Spleen (tissue), 13 donors: ENCODE measurements at regions of chr10 and their contacts with region 1.

Region 1: DNA sequence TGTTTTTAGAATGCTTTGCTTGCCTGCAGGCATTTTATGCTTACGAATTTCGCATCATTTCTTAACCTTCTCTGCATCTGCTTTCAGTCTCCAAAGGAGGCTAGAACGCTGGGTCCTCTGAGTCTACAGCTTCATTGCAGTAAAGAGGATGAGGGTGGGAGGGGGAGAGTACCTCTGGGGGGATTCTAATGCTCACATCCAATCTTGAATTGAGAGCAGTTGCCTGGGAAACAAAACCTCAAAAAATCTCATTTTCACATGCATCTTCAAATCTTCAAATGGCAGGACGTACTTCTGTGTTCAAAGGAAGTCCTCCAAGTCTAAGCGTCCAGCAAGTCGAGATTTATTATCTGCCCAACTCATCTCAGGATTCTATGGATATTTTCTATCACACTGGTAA is 100.7 kb upstream of the PRKCQ start:
- DNase-seq: no peak
- H3K4me3 ChIP-seq: no peak overlapping the region
- H3K27ac ChIP-seq: no peak overlapping the region
- H3K4me1 ChIP-seq: peaks cover 0 to 5% (median 2%) of the 10 kb centered on the region in 6 donors
- H3K27me3 ChIP-seq: peaks cover 0 to 11% (median 0%) of the 10 kb centered on the region in 7 donors
- CTCF ChIP-seq: no peak
- POLR2A ChIP-seq: no peak

Region 2: DNA sequence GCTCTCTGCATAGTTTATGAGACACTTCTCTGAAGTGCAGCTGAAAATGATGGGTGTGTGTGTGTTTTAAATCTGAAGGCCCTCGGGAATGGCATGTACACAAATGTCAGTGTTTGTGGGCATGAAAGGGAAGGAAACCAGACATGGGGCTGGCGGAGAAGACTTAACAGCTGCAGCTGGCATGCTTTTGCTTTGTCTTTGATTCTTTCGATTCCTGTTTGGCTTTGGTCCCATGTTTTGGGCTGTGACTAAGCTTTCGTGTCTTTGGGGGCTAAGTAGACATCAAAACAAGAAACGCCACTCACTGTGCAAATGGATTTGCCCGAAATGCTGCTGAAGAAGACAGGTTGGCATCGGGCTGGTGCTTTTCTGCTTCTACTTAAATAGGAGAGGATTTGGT is 298.7 kb before region 1 on chr10:
- intact Hi-C with region 1: no loop called
- DNase-seq: no peak
- H3K4me3 ChIP-seq: peak overlapping the region in 1 of 8 donors; percentile 7
- H3K27ac ChIP-seq: peak overlapping the region in 5 of 8 donors; percentile 27 to 74 (median 71)
- H3K4me1 ChIP-seq: peaks cover 0 to 37% (median 14%) of the 10 kb centered on the region in 6 donors
- H3K27me3 ChIP-seq: no peaks in the 10 kb centered on the region
- CTCF ChIP-seq: no peak
- POLR2A ChIP-seq: no peak

Region 3: GRCh38 chr10:6416892-6417512 is 263.7 kb before region 1 on chr10:
- intact Hi-C with region 1: loop called (anchors 5 kb)
- DNase-seq: no peak
- H3K4me3 ChIP-seq: no peak overlapping the region
- H3K27ac ChIP-seq: no peak overlapping the region
- H3K4me1 ChIP-seq: no peaks in the 10 kb centered on the region
- H3K27me3 ChIP-seq: no peaks in the 10 kb centered on the region
- CTCF ChIP-seq: peak; percentile 46 to 73 (median 65)
- POLR2A ChIP-seq: no peak